Dorsolateral prefrontal cortex (tissue), 120 donors: ENCODE measurements at regions of chr6 and their contacts with region 1.

Region 1: DNA sequence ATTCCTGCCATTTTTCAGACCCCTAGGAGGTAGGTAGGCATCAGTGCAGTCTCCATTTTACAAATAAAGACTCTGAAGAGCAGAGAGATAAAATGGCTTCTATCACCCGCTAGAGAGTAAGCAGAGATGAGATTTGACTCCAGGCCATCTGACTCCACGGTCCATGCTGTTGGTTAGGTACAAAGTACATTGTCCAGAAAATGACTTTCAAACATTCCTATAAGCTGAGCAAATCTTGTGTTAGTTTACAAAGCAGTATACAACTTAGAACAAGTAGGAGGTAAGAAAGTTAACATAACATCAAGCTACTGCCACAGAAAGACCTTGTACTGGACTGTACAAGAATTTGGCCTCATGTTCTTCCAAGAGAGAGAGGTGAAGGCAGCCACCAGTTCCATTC is 14.9 kb downstream of the BTN1A1 start:
- DNase-seq: no peak
- H3K4me3 ChIP-seq: no peak overlapping the region
- H3K27ac ChIP-seq: no peak overlapping the region
- H3K27me3 ChIP-seq: no peaks in the 10 kb centered on the region
- CTCF ChIP-seq: no peak

Region 2: GRCh38 chr6:26475823-26476729 is 38.9 kb before region 1 on chr6:
- intact Hi-C with region 1: loop called in 1 of 2 experiments (anchors 5 kb)
- DNase-seq: peak in 1 of 10 donors; percentile 13
- H3K4me3 ChIP-seq: no peak overlapping the region
- H3K27ac ChIP-seq: peak overlapping the region in 44 of 59 donors; percentile 3 to 93 (median 62)
- H3K27me3 ChIP-seq: no peaks in the 10 kb centered on the region
- CTCF ChIP-seq: no peak